CD4-positive, alpha-beta memory T cell (primary cell): ENCODE measurements at regions of chr9 and their contacts with region 1.

Region 1: GRCh38 chr9:5799314-5799713 is 33.6 kb downstream of the ERMP1 start:
- DNase-seq: peak in 4 of 5 donors; percentile 3 to 15 (median 7)
- H3K4me3 ChIP-seq: no peak overlapping the region
- H3K4me3 Mint-ChIP-seq: no peak overlapping the region
- H3K27ac ChIP-seq: no peak overlapping the region
- H3K27ac Mint-ChIP-seq: peak overlapping the region in 2 of 7 donors; percentile 37 to 63
- H3K4me1 ChIP-seq: peaks cover 4% of the 10 kb centered on the region
- H3K4me1 Mint-ChIP-seq: peaks cover 12 to 22% (median 13%) of the 10 kb centered on the region in 4 donors
- H3K27me3 ChIP-seq: no peaks in the 10 kb centered on the region
- H3K27me3 Mint-ChIP-seq: no peaks in the 10 kb centered on the region

Region 2: DNA sequence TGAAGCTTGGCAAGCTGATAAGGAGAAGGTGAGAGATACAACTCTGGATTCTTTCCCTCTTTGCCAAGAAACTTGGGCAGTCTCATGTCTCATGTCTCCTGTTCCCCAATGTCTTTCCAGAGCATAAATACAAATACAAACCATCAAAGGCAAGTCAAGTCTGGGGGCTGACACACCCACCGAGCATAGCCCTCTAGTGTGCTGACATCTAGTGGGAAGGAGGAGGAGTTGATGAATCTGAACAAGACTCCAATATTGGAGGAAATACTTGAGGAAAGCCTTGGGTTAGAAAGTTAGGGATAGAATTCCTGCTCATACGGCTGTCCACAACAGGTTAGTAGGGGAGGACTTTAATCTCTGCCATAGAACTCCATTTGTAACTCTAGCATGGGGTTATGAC is 100.0 kb after region 1 on chr9:
- CTCF ChIA-PET with region 1: interaction called, 3 read pairs
- POLR2A ChIA-PET with region 1: no interaction called
- intact Hi-C with region 1: loop called (anchors 1 kb)
- DNase-seq: no peak
- H3K4me3 ChIP-seq: no peak overlapping the region
- H3K4me3 Mint-ChIP-seq: no peak overlapping the region
- H3K27ac ChIP-seq: no peak overlapping the region
- H3K27ac Mint-ChIP-seq: peak overlapping the region in 1 of 7 donors; percentile 0
- H3K4me1 ChIP-seq: no peaks in the 10 kb centered on the region
- H3K4me1 Mint-ChIP-seq: peaks cover 0 to 1% (median 0%) of the 10 kb centered on the region in 4 donors
- H3K27me3 ChIP-seq: no peaks in the 10 kb centered on the region
- H3K27me3 Mint-ChIP-seq: no peaks in the 10 kb centered on the region

Region 3: DNA sequence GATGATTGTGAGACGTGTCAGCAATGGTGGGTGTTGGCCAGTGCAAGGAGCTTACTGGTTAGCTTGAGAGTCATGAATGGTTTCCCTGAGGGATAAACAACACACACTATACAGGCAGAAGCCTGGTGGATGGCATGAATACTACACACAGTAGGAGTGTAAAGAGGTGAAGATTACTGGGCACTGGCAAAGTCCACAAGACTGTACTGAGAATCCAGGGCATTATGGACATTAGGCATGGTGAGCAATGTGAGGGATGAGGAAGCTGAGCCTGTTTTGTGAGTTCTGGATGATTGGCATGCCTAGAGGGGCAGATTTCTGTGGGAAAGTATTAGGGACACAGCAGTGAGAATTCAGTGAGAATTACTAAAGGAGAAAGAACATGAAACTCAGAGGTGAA is 1029.7 kb after region 1 on chr9:
- CTCF ChIA-PET with region 1: no interaction called
- POLR2A ChIA-PET with region 1: no interaction called
- intact Hi-C with region 1: no loop called
- DNase-seq: no peak
- H3K4me3 ChIP-seq: no peak overlapping the region
- H3K4me3 Mint-ChIP-seq: no peak overlapping the region
- H3K27ac ChIP-seq: no peak overlapping the region
- H3K27ac Mint-ChIP-seq: peak overlapping the region in 3 of 7 donors; percentile 0 to 16 (median 10)
- H3K4me1 ChIP-seq: no peaks in the 10 kb centered on the region
- H3K4me1 Mint-ChIP-seq: peaks cover 7 to 16% (median 14%) of the 10 kb centered on the region in 4 donors
- H3K27me3 ChIP-seq: no peaks in the 10 kb centered on the region
- H3K27me3 Mint-ChIP-seq: no peaks in the 10 kb centered on the region